ENCODE measurements at regions of chr9 and their contacts with region 1.

Region 1: DNA sequence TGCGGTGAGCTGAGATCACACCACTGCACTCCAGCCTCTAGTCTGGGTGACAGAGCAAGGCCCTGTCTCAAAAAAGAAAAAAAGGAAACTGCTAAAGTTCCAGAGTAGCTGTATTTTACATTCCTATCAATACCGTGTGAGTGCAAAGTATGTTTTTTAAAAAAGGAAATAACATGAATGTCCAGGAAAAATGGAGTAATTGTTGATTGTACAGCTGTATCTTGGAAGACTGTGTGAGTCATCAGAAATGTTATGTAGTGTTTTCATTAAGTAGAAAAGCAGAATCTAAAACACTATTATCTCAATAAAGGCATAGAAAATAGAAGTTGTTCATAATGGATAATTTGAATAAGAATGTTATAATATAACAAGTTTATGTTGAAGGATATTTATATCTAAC is 53.9 kb downstream of the ZCCHC7 start:
- DNase-seq: no peak
- ATAC-seq: no peak
- H3K4me3 ChIP-seq: no peak overlapping the region
- H3K27ac ChIP-seq: no peak overlapping the region
- H3K4me1 ChIP-seq: peaks cover 0 to 15% (median 0%) of the 10 kb centered on the region in 12 donors
- H3K27me3 ChIP-seq: no peaks in the 10 kb centered on the region
- CTCF ChIP-seq: no peak
- POLR2A ChIP-seq: no peak

Region 2: DNA sequence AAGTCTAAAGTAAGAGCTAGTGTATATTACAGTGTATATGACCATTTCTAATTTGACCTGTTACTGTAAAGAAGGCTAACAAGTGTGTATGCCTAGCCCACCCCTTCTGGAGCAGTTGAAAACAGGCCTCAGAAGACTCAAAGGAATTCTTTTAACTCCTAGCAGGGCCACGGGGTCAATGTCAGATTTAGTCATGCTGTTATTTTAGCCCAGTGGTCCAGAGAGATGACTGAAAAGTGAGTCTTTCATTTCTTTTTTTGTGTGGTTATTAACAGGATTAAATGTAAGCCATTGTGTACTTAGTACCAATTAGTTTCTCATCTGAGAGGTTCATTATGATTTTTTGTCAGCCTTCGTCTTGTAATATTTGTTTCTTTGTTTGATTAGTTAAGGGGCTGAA is 29.5 kb before region 1 on chr9:
- intact Hi-C with region 1: no loop called
- DNase-seq: no peak
- ATAC-seq: no peak
- H3K4me3 ChIP-seq: no peak overlapping the region
- H3K27ac ChIP-seq: no peak overlapping the region
- H3K4me1 ChIP-seq: peaks cover 0 to 44% (median 0%) of the 10 kb centered on the region in 12 donors
- H3K27me3 ChIP-seq: no peaks in the 10 kb centered on the region
- CTCF ChIP-seq: no peak
- POLR2A ChIP-seq: no peak

Region 3: DNA sequence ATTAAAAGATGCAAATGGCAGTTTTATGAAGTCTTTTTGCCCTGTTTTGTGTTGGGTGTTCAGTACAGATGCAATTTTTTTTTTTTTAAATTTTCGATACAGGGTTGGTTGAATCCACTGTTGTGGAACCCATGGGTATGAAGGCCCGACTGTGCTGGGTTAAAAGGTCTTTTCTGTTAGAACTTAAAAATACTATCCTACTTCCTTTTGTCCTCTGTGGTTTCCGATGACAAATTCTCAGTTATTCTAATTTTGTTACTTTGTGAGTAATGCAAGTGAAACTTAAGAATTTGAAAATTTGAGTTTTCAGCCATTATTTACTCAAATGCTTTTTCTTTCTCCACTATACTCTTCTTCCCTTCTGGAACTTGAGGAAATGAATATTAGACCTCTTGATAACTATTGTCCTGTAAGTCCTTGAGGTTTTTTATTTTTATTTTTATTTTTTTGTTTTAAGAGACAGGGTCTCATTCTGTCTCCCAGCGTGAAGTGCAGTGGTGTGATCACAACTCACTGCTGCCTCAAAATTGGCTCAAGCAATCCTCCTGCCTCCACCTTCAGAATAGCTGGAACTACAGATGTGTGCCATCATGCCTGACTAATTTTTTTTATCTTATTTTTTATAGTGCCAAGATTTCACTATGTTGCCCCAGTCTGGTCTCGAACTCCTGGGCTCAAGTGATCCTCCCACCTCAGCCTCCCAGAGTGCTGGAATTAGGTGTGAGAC is 13.6 kb after region 1 on chr9:
- intact Hi-C with region 1: loop called in 1 of 10 experiments (anchors 2 kb)
- DNase-seq: no peak
- ATAC-seq: no peak
- H3K4me3 ChIP-seq: no peak overlapping the region
- H3K27ac ChIP-seq: no peak overlapping the region
- H3K4me1 ChIP-seq: peaks cover 0 to 11% (median 0%) of the 10 kb centered on the region in 12 donors
- H3K27me3 ChIP-seq: no peaks in the 10 kb centered on the region
- CTCF ChIP-seq: no peak
- POLR2A ChIP-seq: no peak

Measured in heart left ventricle (tissue), 16 donors.